Right cardiac atrium (tissue), 5 donors: ENCODE measurements at regions of chr1 and their contacts with region 1.

Region 1: GRCh38 chr1:151254217-151255213 is at the start of gene PSMD4:
- DNase-seq: peak; percentile 94 to 97 (median 97)
- ATAC-seq: peak; percentile 99
- H3K4me3 ChIP-seq: peak within 1 kb of the TSS; percentile 69
- H3K27ac ChIP-seq: peak within 1 kb of the TSS; percentile 75
- H3K4me1 ChIP-seq: no peaks in the 10 kb centered on the region
- H3K27me3 ChIP-seq: no peaks in the 10 kb centered on the region
- total RNA-seq, gene PSMD4: 134 to 163 (median 144) TPM

Region 2: DNA sequence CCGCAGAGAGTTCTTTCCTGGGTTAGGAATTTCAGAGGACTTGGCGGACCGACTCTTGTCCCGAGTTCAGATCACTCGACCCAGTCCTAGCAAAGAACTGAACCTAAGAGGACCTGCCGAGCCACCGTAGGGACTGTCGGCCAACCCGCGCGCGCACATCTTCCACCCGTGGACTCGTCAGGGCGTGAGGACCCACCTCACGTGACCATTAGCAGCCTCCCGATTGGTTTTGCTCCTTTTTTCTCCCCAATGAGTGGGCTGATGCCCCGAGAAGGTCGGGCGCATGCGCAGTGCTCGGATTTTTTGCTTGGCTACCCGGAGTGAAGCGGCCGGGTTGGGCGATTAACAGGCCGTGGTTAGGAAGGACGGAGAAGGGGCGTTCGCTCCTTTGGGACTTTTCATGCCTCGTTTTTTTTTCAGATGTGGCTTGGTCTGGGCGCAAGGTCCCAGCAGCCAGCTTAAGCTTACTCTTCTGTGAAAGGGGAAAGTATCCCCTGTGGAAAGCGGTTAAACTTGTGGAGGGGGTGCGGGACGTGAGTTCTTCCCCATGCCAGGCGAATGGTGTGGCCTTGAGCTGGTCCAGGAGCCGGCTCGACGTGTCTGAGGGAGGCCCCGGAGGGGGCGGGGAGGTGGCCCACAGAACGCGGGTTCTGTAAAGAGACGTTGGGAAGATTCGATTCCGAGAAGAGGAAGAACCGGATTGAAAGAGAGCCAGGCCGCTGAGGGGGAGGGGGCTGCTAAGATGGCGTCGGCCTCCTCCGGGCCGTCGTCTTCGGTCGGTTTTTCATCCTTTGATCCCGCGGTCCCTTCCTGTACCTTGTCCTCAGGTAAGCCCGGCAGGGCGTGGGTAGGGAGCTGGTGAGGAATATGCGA is 56.0 kb before region 1 on chr1 and contains the start of gene PIP5K1A:
- intact Hi-C with region 1: loop called in 3 of 4 experiments (anchors 2 to 5 kb)
- DNase-seq: peak; percentile 99 to 100 (median 100)
- ATAC-seq: peak; percentile 95 to 97
- H3K4me3 ChIP-seq: peak within 1 kb of the TSS; percentile 93
- H3K27ac ChIP-seq: peak within 1 kb of the TSS; percentile 82
- H3K4me1 ChIP-seq: no peaks in the 10 kb centered on the region
- H3K27me3 ChIP-seq: no peaks in the 10 kb centered on the region
- total RNA-seq, gene PIP5K1A: 33.7 to 50.7 (median 38.2) TPM